ENCODE measurements at regions of chr5 and their contacts with region 1.

Region 1: GRCh38 chr5:119974731-119975434 is 345.5 kb downstream of the FAM170A start:
- DNase-seq: no peak
- H3K4me3 ChIP-seq: no peak overlapping the region
- CTCF ChIP-seq: no peak
- POLR2A ChIP-seq: no peak

Region 2: GRCh38 chr5:121783700-121784099 is 1808.8 kb after region 1 on chr5:
- intact Hi-C with region 1: loop called (anchors 5 kb)
- DNase-seq: no peak
- H3K4me3 ChIP-seq: no peak overlapping the region
- CTCF ChIP-seq: no peak
- POLR2A ChIP-seq: no peak

Measured in lower leg skin (tissue), 4 donors.